Activated CD4-positive, alpha-beta memory T cell treated with anti-CD3 and anti-CD28 coated beads for 36 hours (primary cell): ENCODE measurements at regions of chr5 and their contacts with region 1.

Region 1: GRCh38 chr5:10418654-10419345 is 22.9 kb upstream of the ROPN1L start:
- DNase-seq: no peak
- H3K4me3 Mint-ChIP-seq: no peak overlapping the region
- H3K27ac Mint-ChIP-seq: peak overlapping the region; percentile 32
- H3K4me1 Mint-ChIP-seq: peaks cover 43% of the 10 kb centered on the region
- H3K27me3 Mint-ChIP-seq: no peaks in the 10 kb centered on the region

Region 2: GRCh38 chr5:10257870-10258269 is 160.9 kb before region 1 on chr5:
- CTCF ChIA-PET with region 1: interaction called, 3 read pairs
- POLR2A ChIA-PET with region 1: interaction called, 3 read pairs
- intact Hi-C with region 1: loop called (anchors 2 kb)
- DNase-seq: no peak
- H3K4me3 Mint-ChIP-seq: no peak overlapping the region
- H3K27ac Mint-ChIP-seq: peak overlapping the region; percentile 63
- H3K4me1 Mint-ChIP-seq: peaks cover 47% of the 10 kb centered on the region
- H3K27me3 Mint-ChIP-seq: no peaks in the 10 kb centered on the region

Region 3: DNA sequence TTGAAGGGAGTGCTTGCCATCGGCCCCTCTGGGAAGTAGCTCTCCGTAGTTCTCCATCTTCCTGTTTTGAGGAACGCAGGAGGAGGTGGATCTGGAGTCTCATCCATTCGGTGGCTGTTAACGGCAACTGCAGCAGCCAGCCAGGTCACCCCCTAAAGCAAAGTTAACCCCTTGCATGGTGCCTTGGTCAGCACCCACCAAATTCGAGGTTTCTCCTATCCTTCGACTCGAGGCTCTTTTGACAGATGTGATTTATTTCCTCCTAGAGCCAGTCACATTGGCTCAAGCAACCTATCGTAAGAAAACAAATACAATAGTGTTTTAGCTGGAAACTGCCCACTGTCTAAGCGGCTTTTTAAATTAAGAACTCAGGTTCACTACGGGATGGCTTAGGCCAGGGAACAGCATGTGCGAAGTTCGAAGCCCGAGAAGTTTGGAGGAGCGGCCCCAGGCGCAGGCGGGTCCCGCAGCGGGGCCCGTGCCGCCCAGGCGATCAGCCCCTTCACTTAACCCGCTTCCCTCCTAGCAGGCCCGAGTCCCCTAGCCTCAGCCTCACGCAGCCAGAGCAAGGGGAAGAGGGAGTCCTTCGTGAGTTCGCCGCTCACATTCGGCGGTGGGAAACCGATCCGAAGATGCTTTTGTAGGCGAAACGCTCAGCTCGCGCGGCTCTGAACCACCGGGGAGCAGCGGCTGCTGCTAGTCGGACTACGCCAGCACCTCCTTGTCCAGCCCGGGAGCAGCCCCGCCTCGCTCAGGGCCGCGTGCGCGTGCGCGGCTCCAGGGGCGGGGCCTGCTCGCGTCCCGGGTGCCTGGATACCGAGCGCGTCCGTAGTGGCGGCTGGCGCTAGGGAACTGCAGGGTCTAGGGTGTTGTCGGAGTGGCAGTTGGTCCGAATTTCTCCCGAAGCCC is 22.5 kb after region 1 on chr5 and contains the start of gene ROPN1L:
- CTCF ChIA-PET with region 1: interaction called, 4 read pairs
- POLR2A ChIA-PET with region 1: interaction called, 4 read pairs
- intact Hi-C with region 1: loop called (anchors 1 kb)
- DNase-seq: peak; percentile 86
- H3K4me3 Mint-ChIP-seq: peak within 1 kb of the TSS; percentile 78
- H3K27ac Mint-ChIP-seq: no peak within 1 kb of the TSS
- H3K4me1 Mint-ChIP-seq: peaks cover 33% of the 10 kb centered on the region
- H3K27me3 Mint-ChIP-seq: no peaks in the 10 kb centered on the region
- total RNA-seq, gene ROPN1L: not detected

Region 4: DNA sequence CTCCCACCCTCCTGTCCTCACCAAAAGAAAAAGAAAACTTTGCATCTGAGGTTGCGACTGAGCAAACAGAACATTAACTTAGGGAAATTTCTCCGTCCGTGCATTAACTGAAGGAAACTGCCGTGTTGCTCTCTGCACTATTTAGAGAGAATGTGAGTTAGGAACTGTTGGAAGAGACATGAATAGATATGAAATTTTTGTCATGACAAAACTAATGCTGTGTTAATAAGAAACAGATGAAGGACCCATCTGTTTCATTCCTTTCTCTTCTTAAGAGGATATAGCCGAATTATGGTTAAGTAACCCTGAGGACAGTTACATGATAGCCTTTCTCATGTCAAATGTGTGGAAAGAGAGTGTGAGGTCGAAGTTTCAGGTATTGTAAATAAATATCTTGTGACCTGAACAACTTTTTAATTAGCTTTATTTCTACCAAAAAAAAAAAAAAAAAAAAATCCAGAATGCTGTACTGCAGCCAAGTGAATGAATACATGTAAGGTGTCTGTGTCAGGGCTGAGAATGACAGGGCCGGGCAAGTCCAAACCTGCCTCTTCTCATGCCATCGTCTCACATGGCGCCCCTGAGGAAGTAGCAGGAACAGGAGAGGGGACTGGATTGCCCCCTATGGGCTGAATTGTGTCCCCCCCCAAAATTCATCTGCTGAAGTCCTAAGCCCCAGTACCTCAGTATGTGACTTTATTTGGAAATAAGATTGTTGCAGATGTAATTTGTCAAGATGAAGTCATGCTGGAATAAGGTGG is 109.4 kb after region 1 on chr5:
- CTCF ChIA-PET with region 1: no interaction called
- POLR2A ChIA-PET with region 1: no interaction called
- intact Hi-C with region 1: no loop called
- DNase-seq: no peak
- H3K4me3 Mint-ChIP-seq: no peak overlapping the region
- H3K27ac Mint-ChIP-seq: no peak overlapping the region
- H3K4me1 Mint-ChIP-seq: no peaks in the 10 kb centered on the region
- H3K27me3 Mint-ChIP-seq: peaks cover 6% of the 10 kb centered on the region